HCT116 (cell line): ENCODE measurements at regions of chr4 and their contacts with region 1.

Region 1: DNA sequence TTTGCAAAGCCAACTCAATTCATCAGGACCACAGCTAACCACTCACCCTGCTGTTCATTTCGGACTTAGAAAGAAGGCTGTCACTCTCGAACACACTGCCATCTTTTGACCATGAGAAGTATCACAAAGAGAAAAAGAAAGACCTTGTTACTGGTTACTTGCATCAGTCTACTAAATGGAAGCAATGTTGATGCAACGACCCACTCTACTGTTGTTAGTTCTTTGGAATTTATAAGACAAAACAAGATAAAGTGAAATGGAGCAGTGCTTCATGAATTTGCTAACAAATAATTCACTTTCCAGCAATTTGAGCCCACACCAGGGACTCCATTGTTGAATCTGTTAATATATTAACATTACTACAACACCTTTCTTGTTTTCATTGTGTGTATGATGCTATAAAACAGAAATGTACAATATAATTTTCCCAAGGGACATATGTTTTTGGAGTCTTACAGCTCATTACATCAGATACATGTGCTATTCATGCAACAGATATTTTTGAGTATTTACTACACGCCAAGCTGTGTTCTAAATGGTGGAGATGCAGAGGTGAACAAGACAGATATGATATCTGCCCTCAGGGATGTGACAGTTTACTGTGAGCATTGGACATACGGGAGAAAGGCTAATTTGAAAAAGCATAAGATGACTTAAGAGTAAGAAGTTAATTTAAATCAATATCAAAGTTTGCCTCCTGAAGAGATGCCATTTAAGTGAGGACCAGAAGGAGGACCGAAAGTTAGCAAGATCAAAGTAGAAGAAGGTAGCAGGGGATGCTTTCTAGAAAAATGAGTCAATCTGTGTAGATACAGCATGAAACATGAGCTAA is 87.2 kb downstream of the AREG start:
- DNase-seq: peak; percentile 92
- ATAC-seq: peak; percentile 86
- H3K4me3 ChIP-seq: no peak overlapping the region
- H3K27ac ChIP-seq: peak overlapping the region; percentile 37; the same call in 1 of the 2 replicates
- H3K4me1 ChIP-seq: peaks cover 54 to 79% of the 10 kb centered on the region in 2 experiments
- H3K27me3 ChIP-seq: no peaks in the 10 kb centered on the region
- CTCF ChIP-seq: peak; percentile 59 to 98 (median 69)
- POLR2A ChIP-seq: no peak
- RAD21 ChIP-seq: peak; percentile 95

Region 2: DNA sequence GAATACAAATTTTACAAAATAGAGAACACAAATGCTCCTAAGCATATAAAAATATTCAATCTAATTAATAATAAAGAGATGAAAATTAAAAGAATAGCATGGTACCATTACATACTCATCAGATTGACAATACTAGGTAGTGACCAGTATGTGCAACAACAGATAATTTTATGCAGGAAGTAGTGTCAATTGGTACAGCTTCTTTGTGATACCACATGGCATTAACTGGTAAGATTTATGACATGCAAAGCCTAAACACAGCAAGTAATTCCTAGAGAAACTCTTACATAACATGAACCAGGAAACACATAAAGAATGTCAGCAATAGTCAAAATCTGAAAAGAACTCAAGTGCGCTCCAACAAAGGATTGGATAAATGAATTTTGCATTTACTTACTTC is 459.4 kb before region 1 on chr4:
- CTCF ChIA-PET with region 1: no interaction called
- POLR2A ChIA-PET with region 1: no interaction called
- RAD21 ChIA-PET with region 1: no interaction called
- intact Hi-C with region 1: no loop called
- DNase-seq: no peak
- ATAC-seq: no peak
- H3K4me3 ChIP-seq: no peak overlapping the region
- H3K27ac ChIP-seq: no peak overlapping the region
- H3K4me1 ChIP-seq: no peaks in the 10 kb centered on the region
- H3K27me3 ChIP-seq: no peaks in the 10 kb centered on the region
- CTCF ChIP-seq: no peak
- POLR2A ChIP-seq: no peak
- RAD21 ChIP-seq: no peak

Region 3: GRCh38 chr4:74376888-74377483 is 155.2 kb before region 1 on chr4:
- CTCF ChIA-PET with region 1: interaction called, 10 read pairs
- POLR2A ChIA-PET with region 1: interaction called, 3 read pairs
- RAD21 ChIA-PET with region 1: no interaction called
- intact Hi-C with region 1: loop called (anchors 1 kb)
- DNase-seq: no peak
- ATAC-seq: no peak
- H3K4me3 ChIP-seq: no peak overlapping the region
- H3K27ac ChIP-seq: peak overlapping the region; percentile 94
- H3K4me1 ChIP-seq: peaks cover 53 to 86% of the 10 kb centered on the region in 2 experiments
- H3K27me3 ChIP-seq: no peaks in the 10 kb centered on the region
- CTCF ChIP-seq: peak in 2 of 3 experiments; percentile 57 to 62; a peak in 4 of 6 replicates
- POLR2A ChIP-seq: no peak
- RAD21 ChIP-seq: peak; percentile 76

Region 4: DNA sequence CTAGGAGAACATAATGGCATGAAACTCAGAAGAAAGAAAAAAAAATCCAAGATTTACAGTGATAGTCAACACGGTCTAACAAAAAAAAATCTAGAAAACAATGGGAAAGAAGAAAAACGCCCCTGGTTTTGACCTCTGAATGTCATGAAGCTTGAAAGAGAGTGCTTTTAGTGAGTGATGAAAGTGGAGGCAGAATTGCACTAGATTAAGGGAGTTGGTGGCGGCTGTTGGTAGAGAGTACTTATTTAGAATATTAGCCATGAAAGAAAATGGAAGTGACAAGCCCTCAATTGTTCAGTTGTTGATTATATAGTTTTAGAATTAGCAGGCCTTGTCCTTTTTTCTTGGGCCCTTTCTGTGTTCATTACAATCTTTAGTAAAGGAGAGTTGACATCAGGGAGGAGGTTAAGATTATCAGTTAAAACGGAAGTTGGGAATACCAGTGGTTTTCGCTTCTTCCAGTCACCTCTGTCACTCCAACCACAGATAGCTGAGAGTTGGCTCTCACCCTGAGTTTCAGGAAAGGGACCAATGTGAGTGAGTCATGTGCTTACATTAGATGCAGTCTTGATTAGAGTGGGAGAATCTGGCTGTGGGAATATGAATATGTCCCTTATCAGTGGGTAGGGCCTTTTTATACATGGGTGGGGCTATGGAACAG is 137.6 kb before region 1 on chr4:
- CTCF ChIA-PET with region 1: no interaction called
- POLR2A ChIA-PET with region 1: interaction called, 3 read pairs
- RAD21 ChIA-PET with region 1: no interaction called
- intact Hi-C with region 1: loop called (anchors 1 kb)
- DNase-seq: peak; percentile 82
- ATAC-seq: peak; percentile 72
- H3K4me3 ChIP-seq: peak overlapping the region in 1 of 2 experiments; percentile 8; a peak in 2 of 4 replicates
- H3K27ac ChIP-seq: peak overlapping the region; percentile 86
- H3K4me1 ChIP-seq: peaks cover 30 to 66% of the 10 kb centered on the region in 2 experiments
- H3K27me3 ChIP-seq: no peaks in the 10 kb centered on the region
- CTCF ChIP-seq: no peak
- POLR2A ChIP-seq: no peak
- RAD21 ChIP-seq: peak; percentile 33; the same call in 1 of the 2 replicates

Region 5: DNA sequence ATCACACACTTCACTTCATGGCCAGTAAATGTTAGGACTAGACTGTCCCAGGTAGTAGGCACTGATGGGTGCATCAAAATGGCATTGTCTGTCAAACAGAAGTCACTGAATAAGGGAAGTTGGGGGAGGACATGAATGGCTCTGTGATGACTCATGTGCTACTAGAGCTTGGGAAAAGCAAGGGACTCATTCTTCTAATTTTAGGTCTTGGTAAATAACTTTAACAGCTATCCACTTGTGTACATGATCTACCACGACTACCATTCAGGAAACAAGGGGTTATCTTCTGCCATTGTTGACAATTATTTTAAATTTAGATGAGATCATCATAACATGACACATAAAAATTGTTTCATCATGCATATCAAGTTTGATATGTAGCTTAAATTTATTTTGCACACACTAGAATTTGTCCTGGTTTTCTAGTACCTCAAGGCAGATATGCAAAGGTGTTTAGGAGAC is 80.9 kb before region 1 on chr4:
- CTCF ChIA-PET with region 1: interaction called, 6 read pairs
- POLR2A ChIA-PET with region 1: interaction called, 24 read pairs
- RAD21 ChIA-PET with region 1: interaction called in 1 of 2 experiments, 3 read pairs
- intact Hi-C with region 1: loop called (anchors 2 kb)
- DNase-seq: no peak
- ATAC-seq: peak; percentile 48
- H3K4me3 ChIP-seq: no peak overlapping the region; a peak in 1 of 4 replicates
- H3K27ac ChIP-seq: peak overlapping the region; percentile 85; the same call in 1 of the 2 replicates
- H3K4me1 ChIP-seq: peaks cover 86 to 99% of the 10 kb centered on the region in 2 experiments
- H3K27me3 ChIP-seq: no peaks in the 10 kb centered on the region
- CTCF ChIP-seq: no peak
- POLR2A ChIP-seq: no peak
- RAD21 ChIP-seq: 0 out of 2 replicates have a peak, but pooled peaks have one; percentile 7

Region 6: GRCh38 chr4:74490736-74491135 is 41.4 kb before region 1 on chr4:
- CTCF ChIA-PET with region 1: no interaction called
- POLR2A ChIA-PET with region 1: no interaction called
- RAD21 ChIA-PET with region 1: no interaction called
- intact Hi-C with region 1: no loop called
- DNase-seq: no peak
- ATAC-seq: no peak
- H3K4me3 ChIP-seq: no peak overlapping the region
- H3K27ac ChIP-seq: no peak overlapping the region
- H3K4me1 ChIP-seq: no peaks in the 10 kb centered on the region
- H3K27me3 ChIP-seq: no peaks in the 10 kb centered on the region
- CTCF ChIP-seq: no peak
- POLR2A ChIP-seq: no peak
- RAD21 ChIP-seq: no peak

Region 7: DNA sequence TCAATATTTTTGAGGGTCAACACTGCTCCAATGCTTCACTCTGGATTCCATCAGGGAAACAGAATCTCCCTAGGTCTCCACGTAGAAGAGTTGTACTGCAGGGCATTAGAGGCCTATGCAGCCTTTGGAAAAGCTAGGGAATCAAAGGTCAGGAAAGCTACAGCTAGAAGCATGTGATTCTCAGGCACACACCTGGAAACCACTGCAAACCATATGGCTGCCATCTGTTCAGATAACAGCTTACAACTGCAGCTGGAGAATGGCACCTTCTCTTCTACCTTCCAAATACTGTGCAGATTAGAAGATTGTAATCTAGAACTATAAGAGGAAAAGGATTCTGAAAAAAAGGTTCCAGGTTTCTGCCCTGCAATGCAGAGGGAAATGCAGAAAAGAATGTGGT is 201.6 kb after region 1 on chr4:
- CTCF ChIA-PET with region 1: no interaction called
- POLR2A ChIA-PET with region 1: no interaction called
- RAD21 ChIA-PET with region 1: no interaction called
- intact Hi-C with region 1: no loop called
- DNase-seq: no peak
- ATAC-seq: no peak
- H3K4me3 ChIP-seq: no peak overlapping the region
- H3K27ac ChIP-seq: no peak overlapping the region
- H3K4me1 ChIP-seq: no peaks in the 10 kb centered on the region
- H3K27me3 ChIP-seq: no peaks in the 10 kb centered on the region
- CTCF ChIP-seq: no peak
- POLR2A ChIP-seq: no peak
- RAD21 ChIP-seq: no peak

Region 8: GRCh38 chr4:75081561-75081960 is 549.4 kb after region 1 on chr4:
- CTCF ChIA-PET with region 1: no interaction called
- POLR2A ChIA-PET with region 1: no interaction called
- RAD21 ChIA-PET with region 1: no interaction called
- intact Hi-C with region 1: no loop called
- DNase-seq: no peak
- ATAC-seq: no peak
- H3K4me3 ChIP-seq: no peak overlapping the region
- H3K27ac ChIP-seq: no peak overlapping the region
- H3K4me1 ChIP-seq: no peaks in the 10 kb centered on the region
- H3K27me3 ChIP-seq: no peaks in the 10 kb centered on the region
- CTCF ChIP-seq: no peak
- POLR2A ChIP-seq: no peak
- RAD21 ChIP-seq: no peak